ENCODE measurements at regions of chr5 and their contacts with region 1.

Region 1: GRCh38 chr5:17238521-17239041 is 21.1 kb downstream of the BASP1 start:
- DNase-seq: peak; percentile 72
- H3K4me3 ChIP-seq: peak overlapping the region in 1 of 3 experiments; percentile 28
- H3K27ac ChIP-seq: peak overlapping the region; percentile 77
- H3K4me1 ChIP-seq: peaks cover 34% of the 10 kb centered on the region
- H3K27me3 ChIP-seq: no peaks in the 10 kb centered on the region
- CTCF ChIP-seq: no peak
- POLR2A ChIP-seq: no peak

Region 2: DNA sequence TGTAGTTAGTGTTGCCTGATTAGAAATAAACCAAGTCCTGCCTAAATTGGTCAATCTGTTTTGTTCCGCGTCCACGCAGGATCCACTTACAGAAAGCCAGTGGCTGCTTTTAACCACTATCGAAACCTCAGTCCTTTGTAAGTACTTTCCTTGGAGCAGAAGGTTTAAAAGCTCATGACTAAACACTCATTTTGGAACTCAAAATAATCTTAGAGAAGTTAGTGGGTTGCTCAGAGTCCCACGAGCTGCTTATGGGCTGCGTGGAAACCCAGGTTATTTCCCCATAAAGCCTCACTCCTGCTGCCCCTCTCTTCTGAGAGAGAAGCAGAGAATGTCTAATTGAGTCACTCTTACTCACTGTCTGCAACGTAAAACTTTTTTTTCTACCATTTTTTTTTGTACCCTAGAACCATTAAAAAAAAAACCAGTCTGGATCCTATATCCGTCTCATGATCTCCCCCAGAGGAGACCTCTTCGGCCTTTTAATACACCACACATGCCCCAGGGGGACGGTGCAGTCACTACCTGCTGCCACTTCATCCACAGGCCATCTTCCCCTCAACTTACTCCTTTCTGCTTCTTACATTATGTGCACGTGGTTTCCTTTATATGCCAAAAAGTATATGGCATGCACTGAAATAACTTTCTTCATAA is 13.6 kb before region 1 on chr5:
- CTCF ChIA-PET with region 1: interaction called, 11 read pairs
- POLR2A ChIA-PET with region 1: no interaction called
- dilution Hi-C with region 1: no loop called
- intact Hi-C with region 1: no loop called
- DNase-seq: no peak
- H3K4me3 ChIP-seq: no peak overlapping the region
- H3K27ac ChIP-seq: no peak overlapping the region
- H3K4me1 ChIP-seq: peaks cover 23% of the 10 kb centered on the region
- H3K27me3 ChIP-seq: no peaks in the 10 kb centered on the region
- CTCF ChIP-seq: no peak
- POLR2A ChIP-seq: no peak

Region 3: GRCh38 chr5:17248999-17249634 is 10.5 kb after region 1 on chr5:
- CTCF ChIA-PET with region 1: interaction called, 10 read pairs
- POLR2A ChIA-PET with region 1: interaction called, 4 read pairs
- dilution Hi-C with region 1: no loop called
- intact Hi-C with region 1: loop called (anchors 1 kb)
- DNase-seq: peak; percentile 65
- H3K4me3 ChIP-seq: no peak overlapping the region
- H3K27ac ChIP-seq: peak overlapping the region; percentile 68
- H3K4me1 ChIP-seq: peaks cover 42% of the 10 kb centered on the region
- H3K27me3 ChIP-seq: no peaks in the 10 kb centered on the region
- CTCF ChIP-seq: no peak
- POLR2A ChIP-seq: no peak

Region 4: GRCh38 chr5:17255471-17256021 is 17.0 kb after region 1 on chr5:
- CTCF ChIA-PET with region 1: interaction called, 10 read pairs
- POLR2A ChIA-PET with region 1: interaction called, 4 read pairs
- dilution Hi-C with region 1: no loop called
- intact Hi-C with region 1: no loop called
- DNase-seq: no peak
- H3K4me3 ChIP-seq: no peak overlapping the region
- H3K27ac ChIP-seq: no peak overlapping the region
- H3K4me1 ChIP-seq: peaks cover 42% of the 10 kb centered on the region
- H3K27me3 ChIP-seq: no peaks in the 10 kb centered on the region
- CTCF ChIP-seq: no peak
- POLR2A ChIP-seq: no peak

Region 5: DNA sequence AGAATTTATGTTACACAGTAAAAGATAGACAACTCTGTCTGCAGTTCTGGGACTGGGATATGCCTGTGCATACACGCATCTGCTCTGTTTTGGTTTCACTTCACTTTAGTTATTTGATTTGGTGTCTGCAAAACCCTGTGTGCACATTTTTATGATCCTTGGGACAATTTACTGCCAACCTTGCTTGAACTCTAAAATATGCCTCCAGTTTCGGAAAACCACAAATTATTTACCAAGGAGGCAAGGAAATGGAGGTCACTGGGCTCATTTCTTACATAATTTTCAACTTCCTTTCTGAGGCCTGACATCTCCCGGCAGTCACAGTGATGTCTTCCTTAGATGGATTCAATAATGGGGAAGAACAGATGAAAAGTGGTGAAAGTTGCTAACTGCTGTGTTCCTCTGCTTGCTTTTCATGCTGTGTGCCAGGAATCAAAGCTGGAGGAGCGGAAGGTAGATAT is 198.2 kb after region 1 on chr5:
- CTCF ChIA-PET with region 1: no interaction called
- POLR2A ChIA-PET with region 1: no interaction called
- dilution Hi-C with region 1: no loop called
- intact Hi-C with region 1: loop called (anchors 5 kb)
- DNase-seq: peak; percentile 81
- H3K4me3 ChIP-seq: peak overlapping the region in 2 of 3 experiments; percentile 8 to 21
- H3K27ac ChIP-seq: no peak overlapping the region
- H3K4me1 ChIP-seq: peaks cover 7% of the 10 kb centered on the region
- H3K27me3 ChIP-seq: no peaks in the 10 kb centered on the region
- CTCF ChIP-seq: no peak
- POLR2A ChIP-seq: no peak

Measured in endothelial cell of umbilical vein (primary cell).